ENCODE measurements at regions of chr7 and their contacts with region 1.

Region 1: GRCh38 chr7:66844552-66845378 is 76.3 kb upstream of the TMEM248 start:
- DNase-seq: peak; percentile 96 to 100 (median 100)
- ATAC-seq: peak; percentile 95
- H3K4me3 ChIP-seq: peak overlapping the region; percentile 99
- H3K4me3 Mint-ChIP-seq: peak overlapping the region; percentile 88 to 100 (median 96)
- H3K27ac ChIP-seq: peak overlapping the region; percentile 90
- H3K27ac Mint-ChIP-seq: peak overlapping the region; percentile 98 to 100 (median 100)
- H3K4me1 ChIP-seq: peaks cover 5 to 11% of the 10 kb centered on the region in 2 donors
- H3K4me1 Mint-ChIP-seq: peaks cover 10 to 29% (median 26%) of the 10 kb centered on the region in 7 donors
- H3K27me3 ChIP-seq: no peaks in the 10 kb centered on the region
- H3K27me3 Mint-ChIP-seq: peaks cover 0 to 3% (median 0%) of the 10 kb centered on the region in 5 donors

Region 2: GRCh38 chr7:65750511-65751344 is 1094.0 kb before region 1 on chr7:
- CTCF ChIA-PET with region 1: no interaction called
- POLR2A ChIA-PET with region 1: no interaction called
- intact Hi-C with region 1: loop called (anchors 10 kb)
- DNase-seq: peak; percentile 76 to 91 (median 80)
- ATAC-seq: peak; percentile 99
- H3K4me3 ChIP-seq: peak overlapping the region; percentile 97
- H3K4me3 Mint-ChIP-seq: peak overlapping the region; percentile 90 to 100 (median 98)
- H3K27ac ChIP-seq: peak overlapping the region; percentile 85
- H3K27ac Mint-ChIP-seq: peak overlapping the region; percentile 75 to 95 (median 87)
- H3K4me1 ChIP-seq: peaks cover 6 to 7% of the 10 kb centered on the region in 2 donors
- H3K4me1 Mint-ChIP-seq: peaks cover 0 to 35% (median 20%) of the 10 kb centered on the region in 7 donors
- H3K27me3 ChIP-seq: no peaks in the 10 kb centered on the region
- H3K27me3 Mint-ChIP-seq: no peaks in the 10 kb centered on the region

Region 3: GRCh38 chr7:66379761-66380160 is 465.0 kb before region 1 on chr7:
- CTCF ChIA-PET with region 1: no interaction called
- POLR2A ChIA-PET with region 1: no interaction called
- intact Hi-C with region 1: no loop called
- DNase-seq: no peak
- ATAC-seq: no peak
- H3K4me3 ChIP-seq: no peak overlapping the region
- H3K4me3 Mint-ChIP-seq: no peak overlapping the region
- H3K27ac ChIP-seq: no peak overlapping the region
- H3K27ac Mint-ChIP-seq: no peak overlapping the region
- H3K4me1 ChIP-seq: no peaks in the 10 kb centered on the region
- H3K4me1 Mint-ChIP-seq: peaks cover 0 to 4% (median 0%) of the 10 kb centered on the region in 7 donors
- H3K27me3 ChIP-seq: no peaks in the 10 kb centered on the region
- H3K27me3 Mint-ChIP-seq: no peaks in the 10 kb centered on the region

Region 4: GRCh38 chr7:66557608-66558143 is 287.1 kb before region 1 on chr7:
- CTCF ChIA-PET with region 1: no interaction called
- POLR2A ChIA-PET with region 1: no interaction called
- intact Hi-C with region 1: loop called in 1 of 2 experiments (anchors 1 kb)
- DNase-seq: peak; percentile 39 to 83 (median 68)
- ATAC-seq: peak; percentile 89
- H3K4me3 ChIP-seq: no peak overlapping the region
- H3K4me3 Mint-ChIP-seq: no peak overlapping the region
- H3K27ac ChIP-seq: no peak overlapping the region
- H3K27ac Mint-ChIP-seq: peak overlapping the region in 2 of 9 donors; percentile 51
- H3K4me1 ChIP-seq: peaks cover 0 to 4% of the 10 kb centered on the region in 2 donors
- H3K4me1 Mint-ChIP-seq: peaks cover 0 to 7% (median 4%) of the 10 kb centered on the region in 7 donors
- H3K27me3 ChIP-seq: no peaks in the 10 kb centered on the region
- H3K27me3 Mint-ChIP-seq: no peaks in the 10 kb centered on the region

Region 5: GRCh38 chr7:66628361-66629140 is 216.2 kb before region 1 on chr7 and contains the start of gene KCTD7:
- CTCF ChIA-PET with region 1: no interaction called
- POLR2A ChIA-PET with region 1: interaction called, 7 read pairs
- intact Hi-C with region 1: loop called (anchors 1 kb)
- DNase-seq: peak; percentile 89 to 95 (median 92)
- ATAC-seq: peak; percentile 93
- H3K4me3 ChIP-seq: peak within 1 kb of the TSS; percentile 98
- H3K4me3 Mint-ChIP-seq: peak within 1 kb of the TSS; percentile 82 to 92 (median 89)
- H3K27ac ChIP-seq: peak within 1 kb of the TSS; percentile 91
- H3K27ac Mint-ChIP-seq: peak within 1 kb of the TSS; percentile 65 to 92 (median 89)
- H3K4me1 ChIP-seq: peaks cover 31 to 34% of the 10 kb centered on the region in 2 donors
- H3K4me1 Mint-ChIP-seq: peaks cover 37 to 51% (median 47%) of the 10 kb centered on the region in 7 donors
- H3K27me3 ChIP-seq: no peaks in the 10 kb centered on the region
- H3K27me3 Mint-ChIP-seq: peaks cover 0 to 4% (median 0%) of the 10 kb centered on the region in 5 donors
- total RNA-seq, gene KCTD7: 22.9 to 43.6 (median 33.8) TPM

Region 6: GRCh38 chr7:66681491-66682349 is 163.0 kb before region 1 on chr7:
- CTCF ChIA-PET with region 1: no interaction called
- POLR2A ChIA-PET with region 1: interaction called, 10 read pairs
- intact Hi-C with region 1: loop called (anchors 1 kb)
- DNase-seq: peak; percentile 92 to 97 (median 95)
- ATAC-seq: peak; percentile 98
- H3K4me3 ChIP-seq: peak overlapping the region; percentile 96
- H3K4me3 Mint-ChIP-seq: peak overlapping the region; percentile 82 to 96 (median 92)
- H3K27ac ChIP-seq: peak overlapping the region; percentile 95
- H3K27ac Mint-ChIP-seq: peak overlapping the region; percentile 86 to 98 (median 97)
- H3K4me1 ChIP-seq: peaks cover 5 to 11% of the 10 kb centered on the region in 2 donors
- H3K4me1 Mint-ChIP-seq: peaks cover 7 to 59% (median 31%) of the 10 kb centered on the region in 7 donors
- H3K27me3 ChIP-seq: no peaks in the 10 kb centered on the region
- H3K27me3 Mint-ChIP-seq: no peaks in the 10 kb centered on the region

Region 7: DNA sequence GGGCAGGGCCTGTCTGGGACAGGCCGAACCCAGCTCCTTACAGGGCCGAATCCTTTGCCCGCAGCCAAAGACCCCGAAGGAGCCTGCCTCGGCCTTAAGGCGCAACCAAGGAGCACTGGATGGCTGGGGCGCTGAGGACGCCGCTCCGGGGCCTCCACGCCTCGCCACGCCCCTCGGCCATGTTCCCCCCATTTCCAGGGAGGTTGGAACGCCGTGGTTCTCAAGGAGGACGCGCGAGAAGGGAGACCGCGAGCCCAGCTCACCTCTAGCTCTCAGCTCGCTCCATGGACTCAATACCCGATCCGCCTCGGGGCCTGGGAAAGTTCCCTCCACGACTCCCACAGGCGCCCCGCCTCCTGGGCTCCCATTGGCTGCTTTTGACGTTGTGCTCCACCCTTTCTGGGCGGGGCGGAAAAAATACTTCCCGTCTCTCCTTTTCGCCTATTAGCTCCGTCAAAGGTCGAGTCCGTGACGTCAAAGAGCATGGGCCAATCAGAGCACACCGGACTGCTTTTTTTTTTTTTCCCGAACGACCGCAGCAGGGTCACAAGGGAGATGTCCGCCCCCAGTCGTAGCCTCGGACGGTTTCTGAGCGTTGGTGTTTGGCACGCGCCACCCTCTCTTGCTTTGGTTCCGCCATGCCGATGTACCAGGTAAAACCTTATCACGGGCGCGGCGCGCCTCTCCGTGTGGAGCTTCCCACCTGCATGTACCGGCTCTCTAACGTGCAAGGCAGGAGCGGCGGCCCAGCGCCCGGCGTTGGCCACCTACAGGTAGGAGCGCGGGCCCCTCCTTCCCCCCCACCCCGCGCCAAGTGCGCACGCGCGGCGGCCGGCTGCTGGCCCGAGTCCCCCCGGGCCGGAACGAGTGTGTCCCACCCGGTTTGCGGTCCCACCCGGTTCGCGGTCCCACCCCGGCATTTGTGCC is 457.6 kb after region 1 on chr7:
- CTCF ChIA-PET with region 1: no interaction called
- POLR2A ChIA-PET with region 1: interaction called, 5 read pairs
- intact Hi-C with region 1: loop called (anchors 2 to 5 kb)
- DNase-seq: peak; percentile 90 to 97 (median 95)
- ATAC-seq: peak; percentile 89
- H3K4me3 ChIP-seq: peak overlapping the region; percentile 74
- H3K4me3 Mint-ChIP-seq: peak overlapping the region; percentile 89 to 99 (median 96)
- H3K27ac ChIP-seq: peak overlapping the region; percentile 88
- H3K27ac Mint-ChIP-seq: peak overlapping the region; percentile 87 to 99 (median 98)
- H3K4me1 ChIP-seq: peaks cover 3 to 7% of the 10 kb centered on the region in 2 donors
- H3K4me1 Mint-ChIP-seq: peaks cover 10 to 36% (median 25%) of the 10 kb centered on the region in 7 donors
- H3K27me3 ChIP-seq: no peaks in the 10 kb centered on the region
- H3K27me3 Mint-ChIP-seq: no peaks in the 10 kb centered on the region

Measured in naive thymus-derived CD4-positive, alpha-beta T cell (primary cell).